ENCODE measurements at regions of chrX and their contacts with region 1.

Region 1: DNA sequence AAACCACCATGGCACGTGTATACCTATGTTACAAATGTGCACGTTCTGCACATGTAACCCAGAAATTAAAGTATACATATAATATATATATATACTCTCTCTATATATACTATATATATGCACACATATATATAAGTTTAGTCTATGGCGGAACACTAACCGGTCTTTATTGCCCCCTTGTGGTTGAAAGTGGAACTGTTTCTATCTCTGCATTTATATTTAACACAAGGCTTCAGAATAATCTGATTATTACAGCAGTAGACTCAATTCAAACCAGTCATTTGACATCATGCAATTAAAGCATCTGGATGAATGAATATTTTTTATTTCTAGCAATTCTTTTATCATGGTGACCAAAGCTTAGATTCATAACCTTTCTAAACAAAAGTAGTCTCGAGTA is 14.6 kb downstream of the RAB9B start:
- DNase-seq: peak; percentile 11
- ATAC-seq: peak; percentile 82
- H3K4me3 ChIP-seq: no peak overlapping the region
- H3K27ac ChIP-seq: no peak overlapping the region
- H3K4me1 ChIP-seq: no peaks in the 10 kb centered on the region
- H3K27me3 ChIP-seq: no peaks in the 10 kb centered on the region
- CTCF ChIP-seq: peak; percentile 45 to 60 (median 55); a peak in 5 of 6 replicates
- EP300 ChIP-seq: no peak
- POLR2A ChIP-seq: no peak
- RAD21 ChIP-seq: peak; percentile 58

Region 2: GRCh38 chrX:103343105-103343504 is 474.4 kb before region 1 on chrX:
- CTCF ChIA-PET with region 1: no interaction called
- POLR2A ChIA-PET with region 1: no interaction called
- RAD21 ChIA-PET with region 1: no interaction called
- SMC1A ChIA-PET with region 1: no interaction called
- in situ Hi-C with region 1: no loop called
- intact Hi-C with region 1: loop called (anchors 10 kb)
- DNase-seq: no peak
- ATAC-seq: peak; percentile 76
- H3K4me3 ChIP-seq: no peak overlapping the region
- H3K27ac ChIP-seq: no peak overlapping the region
- H3K4me1 ChIP-seq: no peaks in the 10 kb centered on the region
- H3K27me3 ChIP-seq: no peaks in the 10 kb centered on the region; a peak in 1 of 4 replicates
- CTCF ChIP-seq: peak; percentile 48 to 70 (median 62); a peak in 5 of 6 replicates
- EP300 ChIP-seq: no peak
- POLR2A ChIP-seq: no peak
- RAD21 ChIP-seq: peak; percentile 46; the same call in 1 of the 2 replicates

Region 3: DNA sequence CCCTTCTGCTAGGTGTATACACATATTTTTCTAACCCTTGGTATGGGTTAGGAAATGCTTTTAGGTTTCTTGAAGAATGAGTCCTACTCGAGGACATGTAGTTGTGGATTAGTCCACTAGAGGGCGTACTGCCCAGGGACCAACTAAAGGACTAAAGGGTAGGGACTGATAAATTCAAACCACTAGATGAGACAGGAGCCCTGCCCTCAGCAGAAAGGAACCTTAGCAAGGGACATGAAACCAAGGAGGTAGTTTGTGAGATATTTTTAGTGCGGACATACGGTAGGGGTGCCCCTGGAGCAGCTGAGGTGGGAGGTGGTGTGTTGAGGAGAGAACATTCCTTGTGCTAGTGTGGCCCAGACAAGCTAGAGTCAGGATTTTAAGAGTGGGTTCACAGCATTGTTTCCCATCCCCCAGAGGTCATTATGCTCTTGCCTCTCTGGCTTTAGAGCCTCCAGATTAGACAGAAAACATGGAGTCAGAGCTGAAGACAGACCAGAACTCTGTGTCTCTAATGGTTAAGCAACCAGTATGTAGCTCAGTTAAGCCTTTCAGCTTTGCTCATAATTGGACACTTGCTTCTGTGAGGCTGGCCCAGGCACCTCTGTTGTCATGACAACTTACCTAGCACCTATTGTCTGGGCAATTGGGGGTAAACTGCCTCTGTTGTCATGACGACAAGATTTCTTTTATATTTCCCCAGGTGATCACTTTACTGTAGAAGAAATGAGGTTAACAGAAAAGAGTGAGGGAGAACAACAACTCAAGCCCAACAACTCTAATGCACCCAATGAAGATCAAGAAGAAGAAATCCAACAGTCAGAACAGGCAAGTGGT is 105.8 kb before region 1 on chrX:
- CTCF ChIA-PET with region 1: interaction called, 8 read pairs
- POLR2A ChIA-PET with region 1: no interaction called
- RAD21 ChIA-PET with region 1: no interaction called
- SMC1A ChIA-PET with region 1: no interaction called
- in situ Hi-C with region 1: no loop called
- intact Hi-C with region 1: loop called (anchors 1 kb)
- DNase-seq: no peak
- ATAC-seq: peak; percentile 82
- H3K4me3 ChIP-seq: no peak overlapping the region
- H3K27ac ChIP-seq: no peak overlapping the region
- H3K4me1 ChIP-seq: no peaks in the 10 kb centered on the region
- H3K27me3 ChIP-seq: no peaks in the 10 kb centered on the region
- CTCF ChIP-seq: peak; percentile 61 to 76 (median 72)
- EP300 ChIP-seq: no peak
- POLR2A ChIP-seq: no peak
- RAD21 ChIP-seq: peak; percentile 50

Region 4: DNA sequence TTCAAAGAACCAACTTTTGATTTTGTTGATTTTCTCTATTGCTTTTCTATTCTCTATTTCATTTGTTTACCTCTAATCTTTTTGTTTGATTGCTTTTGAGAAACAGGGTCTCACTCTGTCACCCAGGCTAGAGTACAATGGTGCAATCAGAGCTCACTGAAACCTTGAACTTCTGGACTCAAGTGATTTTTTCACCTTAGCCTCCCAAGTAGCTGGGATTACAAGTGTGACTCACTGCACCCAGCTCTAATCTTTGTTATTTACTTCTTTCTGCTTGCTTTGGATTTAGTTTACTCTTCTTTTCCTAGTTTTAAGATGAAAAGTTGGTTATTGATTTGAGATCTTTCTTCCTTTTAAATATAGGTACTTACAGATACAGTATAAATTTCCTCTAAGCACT is 11.6 kb before region 1 on chrX:
- CTCF ChIA-PET with region 1: no interaction called
- POLR2A ChIA-PET with region 1: no interaction called
- RAD21 ChIA-PET with region 1: no interaction called
- SMC1A ChIA-PET with region 1: no interaction called
- in situ Hi-C with region 1: no loop called
- intact Hi-C with region 1: no loop called
- DNase-seq: no peak
- ATAC-seq: no peak
- H3K4me3 ChIP-seq: no peak overlapping the region
- H3K27ac ChIP-seq: no peak overlapping the region
- H3K4me1 ChIP-seq: no peaks in the 10 kb centered on the region
- H3K27me3 ChIP-seq: no peaks in the 10 kb centered on the region
- CTCF ChIP-seq: no peak
- EP300 ChIP-seq: no peak
- POLR2A ChIP-seq: no peak
- RAD21 ChIP-seq: no peak